ENCODE measurements at regions of chr7 and their contacts with region 1.

Region 1: GRCh38 chr7:73894733-73895551 is 34.0 kb downstream of the TMEM270 start:
- DNase-seq: peak; percentile 93 to 96 (median 95)
- ATAC-seq: peak; percentile 82 to 88
- H3K4me3 ChIP-seq: no peak overlapping the region
- H3K27ac ChIP-seq: peak overlapping the region; percentile 25
- H3K4me1 ChIP-seq: peaks cover 5% of the 10 kb centered on the region
- H3K27me3 ChIP-seq: no peaks in the 10 kb centered on the region

Region 2: DNA sequence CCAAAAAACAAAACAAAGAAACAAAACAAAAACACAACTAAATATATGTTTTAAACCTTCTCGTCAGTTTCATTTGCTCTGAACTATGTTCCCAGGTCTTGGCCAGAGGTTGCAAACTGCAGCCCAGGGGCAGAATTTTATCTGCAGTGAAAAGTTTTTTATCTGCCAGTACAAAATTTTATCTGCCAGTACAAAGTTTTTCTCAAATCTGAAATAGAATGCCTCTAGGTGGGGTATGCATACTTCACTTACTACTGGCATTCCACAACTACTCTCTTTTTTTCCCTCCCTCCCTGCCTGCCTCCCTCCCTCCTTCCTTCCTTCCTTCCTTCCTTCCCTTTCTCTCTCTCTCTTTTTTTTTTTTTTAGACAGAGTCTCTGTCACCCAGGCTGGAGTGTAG is 115.4 kb before region 1 on chr7:
- intact Hi-C with region 1: no loop called
- DNase-seq: no peak
- ATAC-seq: no peak
- H3K4me3 ChIP-seq: no peak overlapping the region
- H3K27ac ChIP-seq: no peak overlapping the region
- H3K4me1 ChIP-seq: no peaks in the 10 kb centered on the region
- H3K27me3 ChIP-seq: no peaks in the 10 kb centered on the region

Region 3: GRCh38 chr7:73986158-73986631 is 91.3 kb after region 1 on chr7:
- intact Hi-C with region 1: loop called in 2 of 4 experiments (anchors 10 kb)
- DNase-seq: peak; percentile 85 to 95 (median 93)
- ATAC-seq: peak; percentile 80
- H3K4me3 ChIP-seq: no peak overlapping the region
- H3K27ac ChIP-seq: peak overlapping the region; percentile 91
- H3K4me1 ChIP-seq: no peaks in the 10 kb centered on the region
- H3K27me3 ChIP-seq: no peaks in the 10 kb centered on the region

Region 4: DNA sequence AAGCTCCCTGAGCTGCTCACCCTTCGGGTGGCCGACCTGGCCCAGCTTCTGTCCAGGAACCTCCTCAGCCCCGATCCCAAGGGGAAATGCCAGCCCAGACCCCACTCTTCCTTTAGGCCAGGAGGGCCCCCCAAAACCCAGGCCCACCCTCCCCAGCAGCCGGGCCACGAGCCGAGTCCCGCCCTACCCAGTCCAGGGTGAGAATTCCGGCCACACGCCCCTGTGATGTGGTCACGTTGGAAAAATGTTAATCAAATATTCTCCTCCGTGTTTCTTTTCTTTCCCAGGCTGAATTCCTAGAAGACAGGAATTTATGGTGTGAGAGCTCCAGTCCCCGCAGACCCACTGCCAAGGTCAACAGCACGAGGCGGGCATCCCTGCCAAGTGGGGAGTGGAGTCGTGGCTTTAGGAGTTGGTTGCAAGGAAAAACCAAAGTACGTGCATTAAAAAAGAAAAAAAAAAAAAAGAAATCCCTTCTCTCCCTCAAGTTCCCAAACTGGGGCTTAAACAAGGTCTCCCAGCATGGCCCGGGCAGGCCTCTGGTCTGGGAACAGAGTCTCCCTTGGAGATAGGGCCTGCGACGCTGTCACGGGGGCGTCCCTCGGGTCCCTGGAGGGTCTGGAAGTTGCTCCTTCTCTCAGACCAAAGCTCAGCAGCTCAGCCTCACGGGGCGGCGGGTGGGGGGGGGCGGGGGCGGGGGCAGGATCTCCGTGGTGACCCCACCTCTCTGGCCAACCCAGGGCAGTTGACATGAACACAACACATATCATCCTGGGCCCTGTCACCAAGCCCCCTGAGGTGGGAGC is 104.9 kb after region 1 on chr7:
- intact Hi-C with region 1: loop called in 1 of 4 experiments (anchors 10 kb)
- DNase-seq: peak; percentile 82 to 91 (median 90)
- ATAC-seq: peak; percentile 75 to 76
- H3K4me3 ChIP-seq: no peak overlapping the region
- H3K27ac ChIP-seq: no peak overlapping the region
- H3K4me1 ChIP-seq: no peaks in the 10 kb centered on the region
- H3K27me3 ChIP-seq: no peaks in the 10 kb centered on the region

Region 5: DNA sequence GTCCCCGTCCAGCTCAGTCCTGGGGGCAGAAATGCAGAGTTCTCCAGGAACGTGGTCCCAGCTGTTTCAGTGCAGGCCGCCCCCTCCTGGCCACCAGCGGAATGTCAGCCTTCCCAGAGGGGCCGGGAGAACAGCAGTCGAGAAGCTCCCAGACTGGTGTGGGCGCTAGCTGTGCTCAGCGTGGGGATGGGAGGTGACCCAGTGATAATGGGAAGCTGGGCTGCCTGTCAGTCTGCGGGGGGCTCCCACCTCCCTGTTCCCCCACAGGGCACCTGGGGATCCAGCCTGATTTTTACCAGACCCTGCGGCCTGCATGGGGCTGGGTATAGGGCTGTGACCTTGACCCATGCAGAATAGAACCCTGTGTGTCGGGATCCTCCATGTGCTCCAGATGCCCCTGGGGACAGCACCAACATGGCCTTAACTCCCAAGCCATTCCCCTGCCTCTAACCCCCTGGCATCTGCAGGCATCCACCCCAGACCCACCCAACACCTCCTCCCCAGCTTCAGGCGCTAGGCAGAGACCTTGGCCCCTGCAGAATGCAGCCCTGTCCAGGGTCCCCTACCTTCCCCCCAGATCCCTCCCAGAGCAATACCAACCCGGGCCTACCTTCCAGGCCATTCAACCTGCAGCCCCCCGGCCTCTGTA is 132.1 kb after region 1 on chr7:
- intact Hi-C with region 1: loop called in 2 of 4 experiments (anchors 5 to 10 kb)
- DNase-seq: peak; percentile 84 to 95 (median 94)
- ATAC-seq: peak; percentile 57 to 64
- H3K4me3 ChIP-seq: no peak overlapping the region
- H3K27ac ChIP-seq: peak overlapping the region; percentile 3
- H3K4me1 ChIP-seq: peaks cover 8% of the 10 kb centered on the region
- H3K27me3 ChIP-seq: no peaks in the 10 kb centered on the region

Region 6: GRCh38 chr7:74032191-74032490 is 137.2 kb after region 1 on chr7:
- intact Hi-C with region 1: loop called in 2 of 4 experiments (anchors 5 to 10 kb)
- DNase-seq: peak; percentile 62 to 78 (median 69)
- ATAC-seq: no peak
- H3K4me3 ChIP-seq: peak overlapping the region; percentile 7
- H3K27ac ChIP-seq: peak overlapping the region; percentile 59
- H3K4me1 ChIP-seq: peaks cover 3% of the 10 kb centered on the region
- H3K27me3 ChIP-seq: no peaks in the 10 kb centered on the region